PC-9 (cell line): ENCODE measurements at regions of chr20 and their contacts with region 1.

Region 1: DNA sequence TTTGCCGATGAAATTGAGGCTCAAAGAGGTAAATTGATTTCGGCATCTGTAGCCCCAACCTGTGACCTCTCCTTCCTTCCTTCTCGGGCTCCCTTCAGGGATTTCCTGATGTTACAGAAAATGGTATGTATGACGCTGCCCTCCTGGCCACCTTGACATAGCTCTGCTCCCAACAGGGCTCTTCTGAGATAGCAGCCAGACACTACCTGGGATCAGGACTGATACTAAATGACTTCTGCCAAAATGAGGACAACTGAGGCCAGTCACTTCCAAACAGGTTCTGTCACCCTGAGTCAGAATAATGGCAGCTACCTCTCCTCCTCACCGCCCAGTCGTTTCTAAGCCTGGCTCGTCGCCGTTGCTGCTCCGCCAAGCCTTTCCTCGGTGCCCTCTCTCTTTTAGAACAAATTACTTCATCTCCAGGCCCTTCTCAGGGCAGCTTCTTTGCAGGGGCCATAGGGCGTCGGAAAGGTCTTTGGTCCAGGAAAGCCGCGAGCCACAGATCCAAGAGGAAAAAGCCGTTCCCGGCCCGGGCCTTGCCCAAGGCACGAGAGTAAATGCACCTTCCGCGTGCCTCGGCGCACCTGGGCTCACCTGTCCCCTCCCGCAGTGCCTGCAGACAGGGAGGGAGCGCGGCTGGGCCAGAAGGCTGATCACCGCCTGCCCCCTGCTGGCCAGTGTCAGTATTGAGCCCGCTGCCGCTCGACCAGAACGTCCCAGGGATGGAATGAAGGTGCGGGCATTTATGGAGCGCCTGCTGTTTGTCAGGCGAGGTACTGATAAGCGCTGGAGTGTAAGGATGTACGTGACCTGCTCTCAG is 904 bp upstream of the LPIN3 start:
- DNase-seq: peak; percentile 80 to 97
- H3K4me3 ChIP-seq: peak overlapping the region; percentile 54
- H3K27ac ChIP-seq: no peak overlapping the region
- H3K4me1 ChIP-seq: peaks cover 15% of the 10 kb centered on the region
- H3K27me3 ChIP-seq: no peaks in the 10 kb centered on the region
- CTCF ChIP-seq: peak; percentile 100

Region 2: DNA sequence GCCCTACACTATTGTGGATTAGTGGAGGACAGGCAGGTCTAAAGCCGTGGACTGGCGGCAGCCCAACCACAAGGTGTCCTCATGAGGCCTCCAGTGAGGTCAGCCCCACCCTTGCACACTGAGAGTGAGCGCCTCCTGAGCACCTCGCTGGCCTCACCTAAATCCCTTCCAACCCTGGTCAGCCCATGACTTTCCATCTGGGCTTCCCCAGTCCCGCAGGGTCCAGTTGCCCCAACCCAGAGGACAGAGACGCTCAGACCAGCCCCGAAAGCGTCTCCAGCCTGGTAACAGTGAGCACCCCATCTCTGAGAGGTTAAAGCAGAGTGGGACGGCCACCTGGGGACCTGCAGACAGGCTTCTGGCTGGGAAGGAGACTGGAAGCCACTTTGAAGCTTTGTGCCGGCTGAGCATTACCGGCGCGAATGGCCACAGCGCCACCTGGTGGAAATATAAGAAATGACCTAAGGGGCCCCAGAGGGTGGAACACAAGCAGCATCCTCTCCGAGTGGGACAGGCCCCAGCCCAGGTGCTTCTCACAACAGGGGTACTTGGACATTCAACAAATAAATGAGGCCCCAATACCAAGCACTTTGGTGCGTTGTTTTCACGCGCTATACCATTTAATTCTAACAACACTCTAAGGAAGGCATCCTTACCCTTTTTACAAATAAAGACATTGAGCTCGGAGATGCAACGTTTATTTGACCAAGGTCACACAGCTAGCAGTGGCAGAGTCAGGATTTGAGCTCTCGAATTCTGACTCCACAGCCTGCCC is 376.8 kb before region 1 on chr20:
- CTCF ChIA-PET with region 1: interaction called, 4 read pairs
- POLR2A ChIA-PET with region 1: no interaction called
- intact Hi-C with region 1: loop called (anchors 1 kb)
- DNase-seq: peak; percentile 54 to 76
- H3K4me3 ChIP-seq: no peak overlapping the region
- H3K27ac ChIP-seq: no peak overlapping the region
- H3K4me1 ChIP-seq: no peaks in the 10 kb centered on the region
- H3K27me3 ChIP-seq: peaks cover 7% of the 10 kb centered on the region; the same call in 1 of the 2 replicates
- CTCF ChIP-seq: peak; percentile 98

Region 3: GRCh38 chr20:41173161-41173721 is 166.5 kb before region 1 on chr20:
- CTCF ChIA-PET with region 1: interaction called, 57 read pairs
- POLR2A ChIA-PET with region 1: no interaction called
- intact Hi-C with region 1: loop called (anchors 1 kb)
- DNase-seq: peak; percentile 45 to 74
- H3K4me3 ChIP-seq: no peak overlapping the region
- H3K27ac ChIP-seq: no peak overlapping the region
- H3K4me1 ChIP-seq: peaks cover 11% of the 10 kb centered on the region
- H3K27me3 ChIP-seq: no peaks in the 10 kb centered on the region
- CTCF ChIP-seq: peak; percentile 98

Region 4: GRCh38 chr20:41268917-41269652 is 70.6 kb before region 1 on chr20:
- CTCF ChIA-PET with region 1: interaction called, 19 read pairs
- POLR2A ChIA-PET with region 1: interaction called, 4 read pairs
- intact Hi-C with region 1: no loop called
- DNase-seq: no peak
- H3K4me3 ChIP-seq: no peak overlapping the region
- H3K27ac ChIP-seq: no peak overlapping the region
- H3K4me1 ChIP-seq: peaks cover 18% of the 10 kb centered on the region
- H3K27me3 ChIP-seq: no peaks in the 10 kb centered on the region
- CTCF ChIP-seq: no peak

Region 5: GRCh38 chr20:41329435-41330342 is 10.0 kb before region 1 on chr20:
- CTCF ChIA-PET with region 1: interaction called, 24 read pairs
- POLR2A ChIA-PET with region 1: no interaction called
- intact Hi-C with region 1: no loop called
- DNase-seq: peak; percentile 59 to 96
- H3K4me3 ChIP-seq: peak overlapping the region; percentile 27; the same call in 1 of the 2 replicates
- H3K27ac ChIP-seq: peak overlapping the region; percentile 81
- H3K4me1 ChIP-seq: peaks cover 20% of the 10 kb centered on the region
- H3K27me3 ChIP-seq: no peaks in the 10 kb centered on the region
- CTCF ChIP-seq: no peak

Region 6: GRCh38 chr20:41617931-41618806 is 278.5 kb after region 1 on chr20 and contains the start of gene CHD6:
- CTCF ChIA-PET with region 1: interaction called, 10 read pairs
- POLR2A ChIA-PET with region 1: no interaction called
- intact Hi-C with region 1: no loop called
- DNase-seq: peak; percentile 99 to 100
- H3K4me3 ChIP-seq: peak within 1 kb of the TSS; percentile 94
- H3K27ac ChIP-seq: peak within 1 kb of the TSS; percentile 51; the same call in 1 of the 2 replicates
- H3K4me1 ChIP-seq: peaks cover 19% of the 10 kb centered on the region
- H3K27me3 ChIP-seq: no peaks in the 10 kb centered on the region; the same call in 1 of the 2 replicates
- CTCF ChIP-seq: no peak
- total RNA-seq, gene CHD6: 48.6 and 51.1 TPM in 2 replicates

Region 7: GRCh38 chr20:41738604-41739206 is 399.0 kb after region 1 on chr20:
- CTCF ChIA-PET with region 1: no interaction called
- POLR2A ChIA-PET with region 1: no interaction called
- intact Hi-C with region 1: loop called (anchors 2 kb)
- DNase-seq: peak in 1 of 2 experiments; percentile 59
- H3K4me3 ChIP-seq: no peak overlapping the region
- H3K27ac ChIP-seq: no peak overlapping the region
- H3K4me1 ChIP-seq: no peaks in the 10 kb centered on the region
- H3K27me3 ChIP-seq: peaks cover 38% of the 10 kb centered on the region
- CTCF ChIP-seq: peak; percentile 89

Region 8: GRCh38 chr20:42281801-42282200 is 942.1 kb after region 1 on chr20:
- CTCF ChIA-PET with region 1: no interaction called
- POLR2A ChIA-PET with region 1: no interaction called
- intact Hi-C with region 1: no loop called
- DNase-seq: no peak
- H3K4me3 ChIP-seq: no peak overlapping the region
- H3K27ac ChIP-seq: no peak overlapping the region
- H3K4me1 ChIP-seq: no peaks in the 10 kb centered on the region
- H3K27me3 ChIP-seq: no peaks in the 10 kb centered on the region
- CTCF ChIP-seq: no peak